ENCODE measurements at regions of chr2 and their contacts with region 1.

Region 1: GRCh38 chr2:189412330-189412953 is 28.8 kb upstream of the WDR75 start:
- DNase-seq: peak; percentile 8 to 27 (median 16)
- H3K4me3 ChIP-seq: no peak overlapping the region
- H3K4me3 Mint-ChIP-seq: no peak overlapping the region
- H3K27ac ChIP-seq: no peak overlapping the region
- H3K27ac Mint-ChIP-seq: no peak overlapping the region
- H3K4me1 ChIP-seq: no peaks in the 10 kb centered on the region
- H3K4me1 Mint-ChIP-seq: no peaks in the 10 kb centered on the region
- H3K27me3 ChIP-seq: no peaks in the 10 kb centered on the region
- H3K27me3 Mint-ChIP-seq: no peaks in the 10 kb centered on the region
- CTCF ChIP-seq: peak; percentile 82

Region 2: DNA sequence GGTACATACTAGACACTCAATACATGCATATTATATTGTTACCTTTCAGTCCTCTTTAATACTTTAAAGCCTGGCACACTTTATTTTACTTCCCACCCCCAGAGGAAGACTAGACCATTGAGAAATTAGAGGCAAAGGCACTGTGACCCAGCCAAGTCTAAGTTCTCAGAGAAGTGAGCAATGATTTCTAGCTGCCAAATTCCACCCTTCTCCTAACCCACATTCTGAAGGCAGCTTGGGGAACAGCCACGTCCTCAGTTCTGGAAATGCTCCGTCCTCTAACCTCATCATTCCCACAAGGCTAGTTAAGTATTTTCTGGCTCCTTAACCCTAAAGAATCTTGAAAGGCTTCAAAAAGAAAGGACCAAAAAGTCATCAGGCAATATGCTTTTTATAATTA is 319.5 kb before region 1 on chr2:
- intact Hi-C with region 1: loop called (anchors 5 kb)
- DNase-seq: no peak
- H3K4me3 ChIP-seq: no peak overlapping the region
- H3K4me3 Mint-ChIP-seq: no peak overlapping the region
- H3K27ac ChIP-seq: no peak overlapping the region
- H3K27ac Mint-ChIP-seq: no peak overlapping the region
- H3K4me1 ChIP-seq: no peaks in the 10 kb centered on the region
- H3K4me1 Mint-ChIP-seq: no peaks in the 10 kb centered on the region
- H3K27me3 ChIP-seq: no peaks in the 10 kb centered on the region
- H3K27me3 Mint-ChIP-seq: no peaks in the 10 kb centered on the region
- CTCF ChIP-seq: no peak

Region 3: DNA sequence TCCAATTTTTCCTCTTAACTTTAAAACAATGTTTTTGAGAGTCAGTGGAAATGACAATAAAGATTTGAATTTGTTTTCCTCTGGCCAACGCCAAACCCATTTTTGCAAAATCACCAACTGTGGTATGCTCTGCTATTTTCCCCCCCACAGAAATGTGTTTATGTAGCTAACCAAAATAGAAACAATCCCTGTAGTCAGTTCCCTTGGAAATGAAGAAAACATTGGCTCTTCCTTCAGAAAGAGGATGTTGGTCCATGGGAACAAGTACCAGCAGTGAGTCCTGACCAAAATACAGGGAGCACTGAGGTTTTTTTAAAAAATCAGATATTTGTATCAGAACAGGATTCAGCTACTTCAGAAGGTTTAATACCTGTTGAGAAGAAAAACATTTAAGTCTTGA is 102.8 kb after region 1 on chr2:
- intact Hi-C with region 1: no loop called
- DNase-seq: no peak
- H3K4me3 ChIP-seq: peak overlapping the region in 1 of 3 experiments; percentile 45
- H3K4me3 Mint-ChIP-seq: no peak overlapping the region
- H3K27ac ChIP-seq: peak overlapping the region in 1 of 2 donors; percentile 67
- H3K27ac Mint-ChIP-seq: peak overlapping the region in 5 of 7 donors; percentile 33 to 83 (median 70)
- H3K4me1 ChIP-seq: peaks cover 49 to 57% of the 10 kb centered on the region in 2 donors
- H3K4me1 Mint-ChIP-seq: peaks cover 55% of the 10 kb centered on the region
- H3K27me3 ChIP-seq: no peaks in the 10 kb centered on the region
- H3K27me3 Mint-ChIP-seq: no peaks in the 10 kb centered on the region
- CTCF ChIP-seq: no peak

Measured in CD14-positive monocyte (primary cell).